Body of pancreas (tissue), 4 donors: ENCODE measurements at regions of chr14 and their contacts with region 1.

Region 1: GRCh38 chr14:24372701-24373416 is 4.9 kb downstream of the NFATC4 start:
- DNase-seq: peak in 1 of 4 donors; percentile 17
- ATAC-seq: no peak
- H3K4me3 ChIP-seq: no peak overlapping the region
- H3K27ac ChIP-seq: no peak overlapping the region
- H3K4me1 ChIP-seq: peaks cover 6% of the 10 kb centered on the region
- H3K27me3 ChIP-seq: no peaks in the 10 kb centered on the region
- CTCF ChIP-seq: no peak
- POLR2A ChIP-seq: no peak

Region 2: GRCh38 chr14:24411443-24412389 is 38.9 kb after region 1 on chr14:
- intact Hi-C with region 1: loop called (anchors 5 kb)
- DNase-seq: peak in 2 of 4 donors; percentile 42 to 56
- ATAC-seq: peak; percentile 78
- H3K4me3 ChIP-seq: no peak overlapping the region
- H3K27ac ChIP-seq: no peak overlapping the region
- H3K4me1 ChIP-seq: no peaks in the 10 kb centered on the region
- H3K27me3 ChIP-seq: no peaks in the 10 kb centered on the region
- CTCF ChIP-seq: peak; percentile 22 to 74 (median 62)
- POLR2A ChIP-seq: no peak

Region 3: DNA sequence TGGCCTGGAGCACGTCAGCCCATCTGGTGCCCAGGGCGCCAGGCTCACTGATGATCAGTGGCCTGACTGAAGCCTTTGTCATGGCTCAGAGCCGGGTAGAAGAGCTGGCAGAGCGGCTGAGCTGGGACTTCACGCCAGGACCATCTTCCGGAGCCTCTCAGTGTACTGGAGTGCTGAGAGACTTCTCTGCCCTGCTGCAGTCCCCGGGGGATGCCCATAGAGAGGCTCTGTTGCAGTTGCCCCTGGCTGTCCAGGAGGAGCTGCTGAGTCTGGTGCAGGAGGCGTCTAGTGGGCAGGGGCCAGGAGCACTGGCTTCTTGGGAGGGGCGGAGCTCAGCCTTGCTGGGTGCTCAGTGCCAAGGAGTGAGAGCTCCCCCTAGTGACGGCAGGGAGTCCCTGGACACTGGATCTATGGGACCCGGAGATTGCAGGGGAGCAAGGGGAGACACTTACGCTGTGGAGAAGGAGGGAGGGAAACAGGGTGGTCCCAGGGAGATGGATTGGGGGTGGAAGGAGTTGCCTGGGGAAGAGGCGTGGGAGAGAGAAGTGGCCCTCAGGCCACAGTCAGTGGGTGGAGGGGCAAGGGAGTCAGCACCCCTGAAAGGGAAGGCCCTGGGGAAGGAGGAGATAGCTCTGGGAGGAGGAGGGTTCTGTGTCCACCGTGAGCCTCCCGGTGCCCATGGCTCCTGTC is 58.9 kb after region 1 on chr14:
- intact Hi-C with region 1: loop called (anchors 5 kb)
- DNase-seq: peak; percentile 92 to 94 (median 93)
- ATAC-seq: peak; percentile 62
- H3K4me3 ChIP-seq: no peak overlapping the region
- H3K27ac ChIP-seq: peak overlapping the region; percentile 33 to 97 (median 93)
- H3K4me1 ChIP-seq: peaks cover 61% of the 10 kb centered on the region
- H3K27me3 ChIP-seq: no peaks in the 10 kb centered on the region
- CTCF ChIP-seq: peak; percentile 87 to 99 (median 95)
- POLR2A ChIP-seq: peak in 1 of 3 donors; percentile 21